ENCODE measurements at regions of chr1 and their contacts with region 1.

Region 1: GRCh38 chr1:154335025-154335714 is 9.8 kb downstream of the ATP8B2 start:
- DNase-seq: peak; percentile 82 to 96 (median 90)
- ATAC-seq: peak; percentile 95
- H3K4me3 ChIP-seq: no peak overlapping the region
- H3K4me3 Mint-ChIP-seq: peak overlapping the region; percentile 77
- H3K27ac ChIP-seq: peak overlapping the region; percentile 42 to 64
- H3K27ac Mint-ChIP-seq: peak overlapping the region; percentile 75
- H3K4me1 ChIP-seq: peaks cover 93% of the 10 kb centered on the region
- H3K4me1 Mint-ChIP-seq: peaks cover 79% of the 10 kb centered on the region
- H3K27me3 ChIP-seq: no peaks in the 10 kb centered on the region
- H3K27me3 Mint-ChIP-seq: no peaks in the 10 kb centered on the region
- CTCF ChIP-seq: peak; percentile 96

Region 2: GRCh38 chr1:154183045-154183915 is 151.9 kb before region 1 on chr1:
- CTCF ChIA-PET with region 1: no interaction called
- POLR2A ChIA-PET with region 1: no interaction called
- intact Hi-C with region 1: loop called in 1 of 2 experiments (anchors 2 kb)
- DNase-seq: peak; percentile 85 to 96 (median 92)
- ATAC-seq: peak; percentile 78
- H3K4me3 ChIP-seq: peak overlapping the region; percentile 88
- H3K4me3 Mint-ChIP-seq: peak overlapping the region; percentile 97
- H3K27ac ChIP-seq: peak overlapping the region; percentile 90 to 93
- H3K27ac Mint-ChIP-seq: peak overlapping the region; percentile 96
- H3K4me1 ChIP-seq: peaks cover 46% of the 10 kb centered on the region
- H3K4me1 Mint-ChIP-seq: peaks cover 54% of the 10 kb centered on the region
- H3K27me3 ChIP-seq: no peaks in the 10 kb centered on the region
- H3K27me3 Mint-ChIP-seq: peaks cover 5% of the 10 kb centered on the region
- CTCF ChIP-seq: no peak

Region 3: DNA sequence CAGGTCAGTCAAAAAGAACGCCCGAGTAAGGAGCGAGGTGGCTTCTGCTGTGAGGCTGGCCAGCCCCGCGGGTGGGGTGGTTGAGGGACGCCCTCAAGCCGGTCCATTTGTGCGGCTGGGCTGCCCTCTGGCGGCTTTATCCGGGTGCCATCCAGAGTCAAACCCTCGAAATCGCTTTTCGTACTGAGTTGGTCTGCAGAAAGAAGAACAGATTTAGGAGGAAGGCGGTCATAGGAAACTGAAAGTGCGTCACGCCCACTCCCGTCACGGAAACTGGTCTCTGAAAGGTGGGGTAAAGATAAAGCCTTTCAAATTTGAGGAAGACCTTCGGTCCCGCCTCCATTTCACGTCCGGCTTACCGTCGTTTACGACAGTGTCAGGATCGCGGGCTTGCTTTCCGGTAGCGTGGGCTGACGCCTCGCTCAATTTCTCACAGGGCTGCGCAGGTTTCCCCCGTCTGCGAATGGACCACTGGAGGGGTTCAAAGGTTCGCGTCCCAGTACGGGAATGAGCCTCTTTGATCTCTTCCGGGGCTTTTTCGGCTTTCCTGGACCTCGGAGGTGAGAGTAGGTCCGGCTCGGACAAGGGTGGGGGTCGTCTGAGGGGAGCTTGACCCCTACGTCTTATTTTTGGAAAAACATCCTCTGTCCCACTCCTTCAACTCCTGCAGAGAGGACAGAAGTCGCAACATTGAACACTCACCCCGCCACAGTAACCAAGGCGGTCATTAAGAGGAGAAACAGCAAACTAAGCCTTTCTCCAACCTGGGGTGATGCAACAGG is 62.8 kb before region 1 on chr1 and contains the start of gene HAX1:
- CTCF ChIA-PET with region 1: interaction called, 7 read pairs
- POLR2A ChIA-PET with region 1: interaction called, 9 read pairs
- intact Hi-C with region 1: loop called (anchors 2 kb)
- DNase-seq: peak; percentile 90 to 99 (median 94)
- ATAC-seq: peak; percentile 85
- H3K4me3 ChIP-seq: peak within 1 kb of the TSS; percentile 82
- H3K4me3 Mint-ChIP-seq: peak within 1 kb of the TSS; percentile 96
- H3K27ac ChIP-seq: peak within 1 kb of the TSS; percentile 81 to 89
- H3K27ac Mint-ChIP-seq: peak within 1 kb of the TSS; percentile 97
- H3K4me1 ChIP-seq: peaks cover 27% of the 10 kb centered on the region
- H3K4me1 Mint-ChIP-seq: peaks cover 37% of the 10 kb centered on the region
- H3K27me3 ChIP-seq: no peaks in the 10 kb centered on the region
- H3K27me3 Mint-ChIP-seq: no peaks in the 10 kb centered on the region
- CTCF ChIP-seq: peak; percentile 76
- total RNA-seq, gene HAX1: 57.5 to 62.5 TPM

Region 4: DNA sequence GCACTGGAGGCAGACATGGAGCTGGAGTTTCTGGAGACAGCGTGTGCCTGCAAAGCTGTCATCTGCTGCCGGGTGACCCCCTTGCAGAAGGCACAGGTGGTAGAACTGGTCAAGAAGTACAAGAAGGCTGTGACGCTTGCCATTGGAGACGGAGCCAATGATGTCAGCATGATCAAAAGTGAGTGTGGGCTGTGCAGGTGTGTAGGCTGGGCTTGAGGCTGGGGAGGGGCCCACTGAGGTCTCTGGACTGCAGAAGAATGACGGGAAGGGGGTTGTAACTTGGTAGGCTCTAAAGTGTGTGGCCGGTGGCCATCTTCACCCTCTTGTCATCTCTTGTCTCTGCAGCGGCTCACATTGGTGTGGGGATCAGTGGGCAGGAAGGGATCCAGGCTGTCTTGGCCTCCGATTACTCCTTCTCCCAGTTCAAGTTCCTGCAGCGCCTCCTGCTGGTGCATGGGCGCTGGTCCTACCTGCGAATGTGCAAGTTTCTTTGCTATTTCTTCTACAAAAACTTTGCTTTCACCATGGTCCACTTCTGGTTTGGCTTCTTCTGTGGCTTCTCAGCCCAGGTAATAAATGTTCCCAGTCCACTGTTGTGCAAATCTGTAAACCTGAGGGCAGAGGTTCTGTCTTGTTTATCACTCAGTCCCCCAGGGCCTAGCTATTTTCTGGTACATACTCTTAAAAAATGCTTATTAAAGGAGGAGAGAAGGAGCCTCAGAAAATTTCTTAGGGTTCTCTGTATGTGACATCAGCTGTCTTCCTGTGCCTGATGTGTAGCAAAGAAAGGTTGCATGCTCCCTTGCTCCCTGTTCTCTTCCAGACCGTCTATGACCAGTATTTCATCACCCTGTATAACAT is 10.0 kb after region 1 on chr1:
- CTCF ChIA-PET with region 1: interaction called, 47 read pairs
- POLR2A ChIA-PET with region 1: interaction called, 45 read pairs
- intact Hi-C with region 1: no loop called
- DNase-seq: peak; percentile 66 to 89 (median 77)
- ATAC-seq: peak; percentile 41
- H3K4me3 ChIP-seq: peak overlapping the region; percentile 62
- H3K4me3 Mint-ChIP-seq: peak overlapping the region; percentile 95
- H3K27ac ChIP-seq: peak overlapping the region in 1 of 2 donors; percentile 7
- H3K27ac Mint-ChIP-seq: peak overlapping the region; percentile 89
- H3K4me1 ChIP-seq: peaks cover 91% of the 10 kb centered on the region
- H3K4me1 Mint-ChIP-seq: peaks cover 76% of the 10 kb centered on the region
- H3K27me3 ChIP-seq: no peaks in the 10 kb centered on the region
- H3K27me3 Mint-ChIP-seq: no peaks in the 10 kb centered on the region
- CTCF ChIP-seq: peak; percentile 91

Region 5: GRCh38 chr1:154386643-154387352 is 51.6 kb after region 1 on chr1:
- CTCF ChIA-PET with region 1: interaction called, 7 read pairs
- POLR2A ChIA-PET with region 1: interaction called, 10 read pairs
- intact Hi-C with region 1: no loop called
- DNase-seq: peak; percentile 43 to 93 (median 65)
- ATAC-seq: peak; percentile 85
- H3K4me3 ChIP-seq: peak overlapping the region; percentile 27
- H3K4me3 Mint-ChIP-seq: peak overlapping the region; percentile 85
- H3K27ac ChIP-seq: peak overlapping the region; percentile 86 to 88
- H3K27ac Mint-ChIP-seq: peak overlapping the region; percentile 89
- H3K4me1 ChIP-seq: peaks cover 48% of the 10 kb centered on the region
- H3K4me1 Mint-ChIP-seq: peaks cover 45% of the 10 kb centered on the region
- H3K27me3 ChIP-seq: no peaks in the 10 kb centered on the region
- H3K27me3 Mint-ChIP-seq: no peaks in the 10 kb centered on the region
- CTCF ChIP-seq: no peak

Measured in CD4-positive, alpha-beta T cell (primary cell).